Activated T-helper 1 cell treated with anti-CD3 and anti-CD28 coated beads, Interleukin-12 subunit alpha, Interleukin-12 subunit beta, Interleukin-2, Interleukin-4 antibody, amounts not matched to agents 30 ng/mL and 10 ng/mL and 1 ng/mL, durations not matched to agents 14 hours and 24 hours and 36 hours (primary cell): ENCODE measurements at regions of chr17 and their contacts with region 1.

Region 1: GRCh38 chr17:47698749-47699535 is 5.0 kb downstream of the TBKBP1 start:
- DNase-seq: peak; percentile 64
- H3K4me3 Mint-ChIP-seq: no peak overlapping the region
- H3K27ac Mint-ChIP-seq: no peak overlapping the region
- H3K4me1 Mint-ChIP-seq: peaks cover 68% of the 10 kb centered on the region
- H3K27me3 Mint-ChIP-seq: no peaks in the 10 kb centered on the region

Region 2: GRCh38 chr17:47670081-47670480 is 28.9 kb before region 1 on chr17:
- intact Hi-C with region 1: no loop called
- DNase-seq: no peak
- H3K4me3 Mint-ChIP-seq: no peak overlapping the region
- H3K27ac Mint-ChIP-seq: peak overlapping the region; percentile 35
- H3K4me1 Mint-ChIP-seq: peaks cover 45% of the 10 kb centered on the region
- H3K27me3 Mint-ChIP-seq: no peaks in the 10 kb centered on the region

Region 3: DNA sequence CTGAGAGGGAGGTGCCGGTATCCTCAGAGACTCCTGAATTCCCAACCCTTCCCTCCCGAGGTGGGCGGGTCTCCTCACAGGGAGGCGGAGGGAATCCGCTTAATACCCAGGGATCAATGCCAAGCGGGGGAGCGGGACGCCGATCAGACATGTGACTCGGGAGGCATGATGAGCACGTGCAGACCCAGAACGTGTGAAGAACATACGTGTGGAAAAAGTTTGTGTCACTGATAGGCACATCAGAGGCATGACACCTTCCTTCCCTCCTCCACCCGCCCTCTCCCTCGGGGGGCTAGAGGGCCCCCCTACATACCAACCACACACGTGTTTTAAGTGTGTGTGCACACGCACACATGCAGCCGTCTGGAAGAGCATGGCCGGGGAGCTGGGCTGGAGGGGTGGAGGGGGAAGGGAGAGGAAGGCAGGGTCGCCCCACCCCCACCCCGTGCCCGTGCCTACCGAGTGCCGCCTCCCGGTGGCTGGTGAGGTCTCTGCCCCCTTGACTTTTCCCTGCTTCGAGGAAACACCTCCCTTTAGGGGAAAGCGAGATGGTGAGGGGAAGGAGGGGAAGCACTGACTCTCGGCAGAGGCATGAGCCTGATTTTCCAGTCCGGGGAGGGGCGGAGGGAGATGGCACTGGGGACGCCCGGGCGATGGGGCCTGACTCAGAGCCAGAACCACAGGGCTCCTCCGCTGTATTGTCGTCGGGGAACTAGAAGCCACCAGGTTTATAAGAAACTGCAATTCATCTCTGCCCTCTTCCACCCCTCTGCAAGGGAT is 22.0 kb after region 1 on chr17:
- intact Hi-C with region 1: loop called (anchors 1 kb)
- DNase-seq: peak; percentile 85
- H3K4me3 Mint-ChIP-seq: peak overlapping the region; percentile 78
- H3K27ac Mint-ChIP-seq: peak overlapping the region; percentile 95
- H3K4me1 Mint-ChIP-seq: peaks cover 83% of the 10 kb centered on the region
- H3K27me3 Mint-ChIP-seq: no peaks in the 10 kb centered on the region

Region 4: GRCh38 chr17:47742319-47743181 is 43.6 kb after region 1 on chr17:
- intact Hi-C with region 1: loop called (anchors 1 kb)
- DNase-seq: no peak
- H3K4me3 Mint-ChIP-seq: no peak overlapping the region
- H3K27ac Mint-ChIP-seq: peak overlapping the region; percentile 43
- H3K4me1 Mint-ChIP-seq: peaks cover 24% of the 10 kb centered on the region
- H3K27me3 Mint-ChIP-seq: no peaks in the 10 kb centered on the region

Region 5: GRCh38 chr17:47789611-47790561 is 90.9 kb after region 1 on chr17:
- intact Hi-C with region 1: loop called (anchors 1 kb)
- DNase-seq: peak; percentile 44
- H3K4me3 Mint-ChIP-seq: peak overlapping the region; percentile 64
- H3K27ac Mint-ChIP-seq: no peak overlapping the region
- H3K4me1 Mint-ChIP-seq: no peaks in the 10 kb centered on the region
- H3K27me3 Mint-ChIP-seq: peaks cover 70% of the 10 kb centered on the region